ENCODE measurements at regions of chr14 and their contacts with region 1.

Region 1: GRCh38 chr14:73472185-73473114 is 14.1 kb upstream of the NUMB start:
- DNase-seq: no peak
- H3K4me3 Mint-ChIP-seq: no peak overlapping the region
- H3K27ac Mint-ChIP-seq: no peak overlapping the region
- H3K4me1 Mint-ChIP-seq: peaks cover 18% of the 10 kb centered on the region
- H3K27me3 Mint-ChIP-seq: peaks cover 6% of the 10 kb centered on the region

Region 2: GRCh38 chr14:73125169-73125588 is 347.3 kb before region 1 on chr14:
- intact Hi-C with region 1: no loop called
- DNase-seq: no peak
- H3K4me3 Mint-ChIP-seq: no peak overlapping the region
- H3K27ac Mint-ChIP-seq: no peak overlapping the region
- H3K4me1 Mint-ChIP-seq: peaks cover 3% of the 10 kb centered on the region
- H3K27me3 Mint-ChIP-seq: no peaks in the 10 kb centered on the region

Region 3: DNA sequence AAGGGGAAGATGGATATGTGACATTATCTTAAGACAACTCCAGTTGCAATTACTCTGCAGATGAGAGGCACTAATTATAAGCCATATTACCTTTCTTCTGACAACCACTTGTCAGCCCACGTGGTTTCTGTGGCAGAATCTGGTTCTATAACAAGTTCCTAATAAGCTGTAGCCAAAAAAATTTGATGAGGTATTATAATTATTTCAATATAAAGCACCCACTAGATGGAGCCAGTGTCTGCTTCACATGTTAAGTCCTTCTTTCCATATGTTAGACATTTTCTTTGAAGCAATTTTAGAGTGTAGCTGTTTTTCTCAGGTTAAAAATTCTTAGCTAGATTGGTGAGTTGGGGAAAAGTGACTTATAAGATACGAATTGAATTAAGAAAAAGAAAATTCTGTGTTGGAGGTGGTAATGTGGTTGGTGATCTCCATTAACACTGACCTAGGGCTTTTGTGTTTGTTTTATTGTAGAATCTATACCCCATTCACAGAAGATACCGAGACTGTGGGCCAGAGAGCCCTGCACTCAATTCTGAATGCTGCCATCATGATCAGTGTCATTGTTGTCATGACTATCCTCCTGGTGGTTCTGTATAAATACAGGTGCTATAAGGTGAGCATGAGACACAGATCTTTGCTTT is 299.2 kb before region 1 on chr14:
- intact Hi-C with region 1: loop called (anchors 1 kb)
- DNase-seq: no peak
- H3K4me3 Mint-ChIP-seq: no peak overlapping the region
- H3K27ac Mint-ChIP-seq: no peak overlapping the region
- H3K4me1 Mint-ChIP-seq: peaks cover 3% of the 10 kb centered on the region
- H3K27me3 Mint-ChIP-seq: no peaks in the 10 kb centered on the region

Region 4: DNA sequence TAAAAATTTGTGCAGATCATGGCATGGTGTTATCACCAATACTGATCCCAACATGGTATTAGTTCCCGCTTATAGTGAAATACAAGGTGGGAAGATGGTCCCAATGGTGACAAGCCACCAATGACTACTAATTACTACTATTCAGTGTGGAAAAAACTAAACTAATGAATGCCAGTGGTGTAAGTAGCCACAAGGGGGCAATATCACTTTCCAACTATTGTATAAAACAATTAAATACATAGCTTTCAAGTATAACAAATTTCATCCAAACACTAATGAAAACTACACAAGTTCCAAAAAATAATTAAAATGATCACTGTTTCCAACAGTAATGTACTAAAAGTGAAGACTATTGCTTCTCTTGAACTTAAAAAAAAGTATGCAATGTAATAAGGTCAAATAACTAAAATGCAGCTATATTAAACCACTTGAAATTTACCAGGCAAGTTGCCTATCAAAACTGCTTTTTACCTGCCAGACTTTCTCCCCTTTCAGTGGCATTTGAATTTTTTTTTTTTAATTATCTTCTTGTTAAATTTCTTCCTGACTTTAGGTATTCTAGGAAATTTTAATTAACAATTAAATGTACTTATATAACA is 177.2 kb before region 1 on chr14:
- intact Hi-C with region 1: loop called (anchors 1 kb)
- DNase-seq: no peak
- H3K4me3 Mint-ChIP-seq: no peak overlapping the region
- H3K27ac Mint-ChIP-seq: no peak overlapping the region
- H3K4me1 Mint-ChIP-seq: peaks cover 22% of the 10 kb centered on the region
- H3K27me3 Mint-ChIP-seq: no peaks in the 10 kb centered on the region

Measured in activated T-helper 2 cell treated with anti-CD3 and anti-CD28 coated beads, Interferon-gamma antibody, Interleukin-2, Interleukin-4, amounts not matched to agents 10 μg/mL and 5 μg/mL and 100 μg/mL, durations not matched to agents 14 hours and 24 hours and 36 hours (primary cell).